ENCODE measurements at regions of chr13 and their contacts with region 1.

Region 1: DNA sequence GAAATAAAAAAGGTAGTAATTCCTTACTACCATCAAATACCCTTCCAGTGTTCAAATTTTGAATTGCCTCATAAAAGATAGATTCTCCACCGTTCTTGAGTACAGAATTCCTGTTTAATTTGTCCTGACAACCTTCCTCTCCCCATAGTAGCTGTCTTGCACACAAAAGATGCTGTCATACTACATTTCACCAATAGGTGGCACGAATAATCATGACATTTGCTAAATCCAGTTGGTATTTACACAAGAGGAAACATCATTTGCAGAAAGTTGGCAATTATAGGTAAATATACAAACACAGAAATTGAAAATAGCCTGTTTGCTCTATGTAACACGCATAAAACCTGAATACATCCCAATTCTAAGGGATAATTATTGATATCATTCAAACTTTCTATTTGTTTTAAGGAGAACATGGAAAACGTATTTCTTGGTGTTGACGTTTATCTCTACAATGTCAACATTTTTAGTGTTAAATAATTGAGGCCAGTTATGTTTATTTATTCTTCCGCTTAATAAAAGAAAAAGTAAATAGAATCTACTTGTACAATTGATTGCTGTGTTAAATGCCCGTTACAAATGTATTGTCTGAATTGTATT is 58.3 kb upstream of the CLDN10 start:
- DNase-seq: peak in 1 of 2 experiments; percentile 63
- H3K4me3 ChIP-seq: no peak overlapping the region
- H3K27ac ChIP-seq: no peak overlapping the region
- H3K4me1 ChIP-seq: peaks cover 16% of the 10 kb centered on the region
- H3K27me3 ChIP-seq: no peaks in the 10 kb centered on the region
- CTCF ChIP-seq: peak; percentile 93

Region 2: DNA sequence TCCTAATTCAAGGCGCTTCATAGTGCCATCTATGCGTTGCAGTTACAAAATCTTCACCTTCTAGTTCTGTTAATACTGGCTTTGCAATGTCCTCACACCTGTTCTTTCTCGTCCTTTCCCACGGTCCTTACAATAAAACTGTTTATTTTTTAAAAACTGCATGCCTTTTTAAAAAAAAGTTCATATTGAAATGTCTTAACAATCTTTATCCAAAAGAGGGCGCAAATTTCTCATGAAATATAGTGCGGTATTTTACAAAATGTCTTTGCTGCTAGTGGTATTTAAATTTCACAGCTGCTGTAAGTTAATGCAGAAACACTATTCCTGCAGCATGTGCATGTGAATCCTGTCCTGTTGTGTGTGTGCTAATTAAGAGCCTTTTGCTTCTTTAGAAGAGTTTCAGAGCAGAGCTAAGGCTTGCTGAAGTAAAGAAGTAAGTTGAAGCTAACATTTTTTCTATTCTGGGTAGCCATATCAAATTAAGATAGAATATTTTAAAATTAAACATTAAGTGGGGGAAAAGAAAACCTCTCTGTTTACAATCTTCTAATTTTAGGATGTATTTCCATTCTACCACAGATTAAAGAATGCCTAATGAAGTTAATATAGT is 42.6 kb after region 1 on chr13:
- CTCF ChIA-PET with region 1: interaction called, 3 read pairs
- POLR2A ChIA-PET with region 1: no interaction called
- intact Hi-C with region 1: loop called (anchors 5 kb)
- DNase-seq: peak in 1 of 2 experiments; percentile 46
- H3K4me3 ChIP-seq: no peak overlapping the region
- H3K27ac ChIP-seq: no peak overlapping the region
- H3K4me1 ChIP-seq: peaks cover 49% of the 10 kb centered on the region
- H3K27me3 ChIP-seq: no peaks in the 10 kb centered on the region
- CTCF ChIP-seq: peak; percentile 62

Region 3: GRCh38 chr13:95624020-95624419 is 129.8 kb after region 1 on chr13:
- CTCF ChIA-PET with region 1: no interaction called
- POLR2A ChIA-PET with region 1: no interaction called
- intact Hi-C with region 1: loop called (anchors 5 kb)
- DNase-seq: peak; percentile 15 to 57
- H3K4me3 ChIP-seq: no peak overlapping the region
- H3K27ac ChIP-seq: no peak overlapping the region
- H3K4me1 ChIP-seq: no peaks in the 10 kb centered on the region
- H3K27me3 ChIP-seq: no peaks in the 10 kb centered on the region
- CTCF ChIP-seq: peak; percentile 87

Measured in PC-9 (cell line).